IMR-90 (cell line): ENCODE measurements at regions of chr22 and their contacts with region 1.

Region 1: DNA sequence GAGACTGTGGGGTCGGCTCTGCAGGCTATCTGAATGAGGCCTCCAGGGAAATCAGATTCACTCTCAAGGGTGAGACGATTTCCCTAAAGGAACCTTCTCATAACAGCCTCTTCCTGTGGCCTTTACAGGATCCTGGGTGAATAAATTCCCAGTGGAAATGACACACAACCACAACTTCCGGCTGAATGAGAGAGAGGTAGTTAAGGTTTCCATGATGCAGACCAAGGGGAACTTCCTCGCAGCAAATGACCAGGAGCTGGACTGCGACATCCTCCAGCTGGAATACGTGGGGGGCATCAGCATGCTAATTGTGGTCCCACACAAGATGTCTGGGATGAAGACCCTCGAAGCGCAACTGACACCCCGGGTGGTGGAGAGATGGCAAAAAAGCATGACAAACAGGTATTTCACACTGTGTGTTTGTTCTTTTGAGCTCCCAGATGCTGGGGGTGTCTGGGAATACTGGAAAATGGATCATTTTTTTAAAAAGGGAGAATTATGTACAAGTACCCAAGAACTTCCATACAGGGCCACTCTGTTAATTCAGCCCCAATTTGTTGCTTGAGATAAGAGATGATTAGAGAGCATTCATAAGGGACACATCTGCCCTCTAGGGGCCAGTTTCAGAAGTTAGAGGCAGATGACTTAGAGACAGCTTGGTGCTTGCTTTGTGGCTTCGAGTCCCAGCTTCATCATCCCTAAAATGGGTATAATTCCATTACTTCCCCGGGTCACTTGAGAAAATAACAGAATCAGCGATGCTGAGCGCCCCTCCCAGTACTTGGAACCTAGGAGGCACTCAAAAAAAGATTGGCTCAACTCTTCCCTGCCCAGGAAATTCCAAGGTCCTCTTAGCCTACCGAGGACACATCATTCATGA is 10.2 kb downstream of the SERPIND1 start:
- DNase-seq: peak; percentile 74
- ATAC-seq: peak; percentile 86
- H3K4me3 ChIP-seq: no peak overlapping the region
- H3K27ac ChIP-seq: no peak overlapping the region
- H3K4me1 ChIP-seq: peaks cover 6% of the 10 kb centered on the region
- H3K27me3 ChIP-seq: no peaks in the 10 kb centered on the region
- CTCF ChIP-seq: peak; percentile 63
- POLR2A ChIP-seq: no peak
- RAD21 ChIP-seq: peak; percentile 56

Region 2: GRCh38 chr22:20391222-20391621 is 392.9 kb before region 1 on chr22:
- CTCF ChIA-PET with region 1: no interaction called
- POLR2A ChIA-PET with region 1: no interaction called
- dilution Hi-C with region 1: no loop called
- in situ Hi-C with region 1: no loop called
- intact Hi-C with region 1: no loop called
- DNase-seq: no peak
- ATAC-seq: no peak
- H3K4me3 ChIP-seq: no peak overlapping the region
- H3K27ac ChIP-seq: no peak overlapping the region
- H3K4me1 ChIP-seq: peaks cover 14% of the 10 kb centered on the region
- H3K27me3 ChIP-seq: no peaks in the 10 kb centered on the region; the same call in 1 of the 2 replicates
- CTCF ChIP-seq: no peak
- POLR2A ChIP-seq: no peak
- RAD21 ChIP-seq: no peak

Region 3: DNA sequence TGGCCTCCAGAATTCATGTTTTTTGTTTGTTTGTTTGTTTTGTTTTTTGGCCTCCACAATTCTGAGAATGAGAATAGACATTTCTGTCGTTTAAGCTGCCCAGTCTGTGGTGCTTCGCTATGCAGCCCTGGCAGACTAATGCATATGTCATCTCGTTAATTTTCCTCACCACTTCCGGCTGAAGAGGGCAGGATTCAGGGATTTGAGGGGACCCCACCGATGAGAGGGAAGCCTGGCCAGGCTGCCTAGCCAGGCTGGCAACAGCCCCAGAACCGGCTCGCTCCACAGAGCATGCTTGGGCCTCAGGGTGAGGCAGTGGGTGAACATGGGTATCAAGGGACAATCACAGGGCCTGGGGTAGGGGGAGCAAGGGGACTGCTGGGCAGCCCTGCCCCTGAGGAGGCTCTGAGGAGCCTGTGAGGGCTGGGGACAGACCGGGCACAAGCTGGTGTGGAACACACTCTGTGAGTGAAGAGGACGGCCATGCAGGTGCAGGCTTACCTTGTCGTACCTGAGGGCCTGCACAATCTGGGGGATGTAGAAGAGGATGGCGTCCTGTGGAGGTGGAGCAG is 58.0 kb before region 1 on chr22:
- CTCF ChIA-PET with region 1: no interaction called
- POLR2A ChIA-PET with region 1: no interaction called
- dilution Hi-C with region 1: no loop called
- in situ Hi-C with region 1: loop called (anchors 10 kb)
- intact Hi-C with region 1: no loop called
- DNase-seq: no peak
- ATAC-seq: no peak
- H3K4me3 ChIP-seq: no peak overlapping the region
- H3K27ac ChIP-seq: no peak overlapping the region
- H3K4me1 ChIP-seq: no peaks in the 10 kb centered on the region
- H3K27me3 ChIP-seq: no peaks in the 10 kb centered on the region
- CTCF ChIP-seq: no peak
- POLR2A ChIP-seq: no peak
- RAD21 ChIP-seq: no peak